Mammary epithelial cell (primary cell): ENCODE measurements at regions of chr6 and their contacts with region 1.

Region 1: DNA sequence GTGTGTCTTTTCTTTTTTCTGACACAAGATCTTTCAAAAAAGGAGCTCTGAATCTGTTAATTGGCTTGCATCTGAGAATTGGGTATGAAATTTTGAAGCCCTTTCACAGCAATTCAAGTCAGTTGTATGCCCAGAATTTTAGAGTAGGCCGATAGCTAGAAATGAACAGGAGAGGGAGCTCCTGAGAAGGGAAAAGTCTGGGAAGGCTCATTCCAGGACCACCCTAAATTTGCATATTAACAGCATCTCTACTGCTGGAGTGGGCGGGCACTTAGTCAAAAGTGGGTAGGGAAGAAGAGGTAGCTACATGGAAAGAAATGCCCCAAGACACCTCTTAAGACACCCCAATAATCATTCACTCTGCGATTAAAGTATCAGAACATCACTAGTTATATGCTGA is 928.3 kb downstream of the TBC1D32 start:
- DNase-seq: no peak
- H3K4me3 ChIP-seq: no peak overlapping the region
- H3K27ac ChIP-seq: no peak overlapping the region
- H3K4me1 ChIP-seq: no peaks in the 10 kb centered on the region
- H3K27me3 ChIP-seq: no peaks in the 10 kb centered on the region
- CTCF ChIP-seq: peak in 1 of 2 donors; percentile 48

Region 2: GRCh38 chr6:120764318-120764717 is 358.4 kb after region 1 on chr6:
- CTCF ChIA-PET with region 1: no interaction called
- dilution Hi-C with region 1: no loop called
- in situ Hi-C with region 1: no loop called
- intact Hi-C with region 1: loop called (anchors 1 kb)
- DNase-seq: peak; percentile 26
- H3K4me3 ChIP-seq: no peak overlapping the region
- H3K27ac ChIP-seq: no peak overlapping the region
- H3K4me1 ChIP-seq: no peaks in the 10 kb centered on the region
- H3K27me3 ChIP-seq: peaks cover 2% of the 10 kb centered on the region
- CTCF ChIP-seq: peak; percentile 34 to 74

Region 3: GRCh38 chr6:120826253-120826652 is 420.3 kb after region 1 on chr6:
- CTCF ChIA-PET with region 1: no interaction called
- dilution Hi-C with region 1: no loop called
- in situ Hi-C with region 1: no loop called
- intact Hi-C with region 1: loop called (anchors 10 kb)
- DNase-seq: peak; percentile 9
- H3K4me3 ChIP-seq: no peak overlapping the region
- H3K27ac ChIP-seq: no peak overlapping the region
- H3K4me1 ChIP-seq: no peaks in the 10 kb centered on the region
- H3K27me3 ChIP-seq: no peaks in the 10 kb centered on the region
- CTCF ChIP-seq: peak; percentile 77 to 84

Region 4: GRCh38 chr6:120876424-120876823 is 470.5 kb after region 1 on chr6:
- CTCF ChIA-PET with region 1: no interaction called
- dilution Hi-C with region 1: no loop called
- in situ Hi-C with region 1: no loop called
- intact Hi-C with region 1: no loop called
- DNase-seq: no peak
- H3K4me3 ChIP-seq: no peak overlapping the region
- H3K27ac ChIP-seq: no peak overlapping the region
- H3K4me1 ChIP-seq: no peaks in the 10 kb centered on the region
- H3K27me3 ChIP-seq: no peaks in the 10 kb centered on the region
- CTCF ChIP-seq: no peak